GM13977 (cell line): ENCODE measurements at regions of chr2 and their contacts with region 1.

Region 1: DNA sequence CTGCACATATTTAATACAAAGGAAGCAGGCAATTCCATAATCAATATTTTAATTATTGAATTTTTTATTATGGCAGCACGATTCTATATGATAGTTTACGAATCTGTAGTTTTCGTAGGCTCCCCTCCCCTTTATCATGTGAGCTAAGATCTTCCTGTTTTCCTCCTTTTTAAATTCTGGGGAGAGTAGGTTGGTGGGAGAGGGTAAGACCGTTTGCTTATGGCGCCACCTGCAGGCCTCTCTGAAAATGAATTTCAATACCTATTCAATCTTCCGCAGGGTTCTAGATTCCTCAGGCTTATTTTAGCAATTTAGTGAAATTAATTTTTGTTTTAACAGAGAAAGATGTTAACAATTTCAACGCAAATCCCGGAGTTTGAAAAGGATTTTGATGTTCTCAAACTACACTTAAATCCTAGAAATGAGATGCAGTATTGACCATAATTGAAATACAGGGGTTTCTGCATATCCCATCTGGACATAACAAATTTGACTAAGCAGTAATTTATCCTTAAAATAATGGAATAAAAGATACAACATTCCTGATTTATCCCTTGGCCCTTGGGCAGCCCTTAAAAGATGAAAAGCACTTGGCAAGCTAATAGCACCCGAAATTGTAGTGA is 12.8 kb upstream of the GBX2 start:
- DNase-seq: peak; percentile 67
- CTCF ChIP-seq: peak; percentile 52

Region 2: GRCh38 chr2:235779444-235779896 is 401.5 kb before region 1 on chr2:
- in situ Hi-C with region 1: loop called (anchors 25 kb)
- DNase-seq: peak; percentile 69
- CTCF ChIP-seq: peak; percentile 78